ENCODE measurements at regions of chr7 and their contacts with region 1.

Region 1: GRCh38 chr7:151782598-151783448 is 94.1 kb downstream of the PRKAG2 start:
- DNase-seq: peak; percentile 77
- H3K4me3 ChIP-seq: peak overlapping the region in 1 of 2 donors; percentile 32
- H3K27ac ChIP-seq: no peak overlapping the region
- H3K4me1 ChIP-seq: peaks cover 6% of the 10 kb centered on the region
- H3K27me3 ChIP-seq: no peaks in the 10 kb centered on the region
- CTCF ChIP-seq: peak; percentile 67 to 85 (median 71)
- POLR2A ChIP-seq: no peak

Region 2: DNA sequence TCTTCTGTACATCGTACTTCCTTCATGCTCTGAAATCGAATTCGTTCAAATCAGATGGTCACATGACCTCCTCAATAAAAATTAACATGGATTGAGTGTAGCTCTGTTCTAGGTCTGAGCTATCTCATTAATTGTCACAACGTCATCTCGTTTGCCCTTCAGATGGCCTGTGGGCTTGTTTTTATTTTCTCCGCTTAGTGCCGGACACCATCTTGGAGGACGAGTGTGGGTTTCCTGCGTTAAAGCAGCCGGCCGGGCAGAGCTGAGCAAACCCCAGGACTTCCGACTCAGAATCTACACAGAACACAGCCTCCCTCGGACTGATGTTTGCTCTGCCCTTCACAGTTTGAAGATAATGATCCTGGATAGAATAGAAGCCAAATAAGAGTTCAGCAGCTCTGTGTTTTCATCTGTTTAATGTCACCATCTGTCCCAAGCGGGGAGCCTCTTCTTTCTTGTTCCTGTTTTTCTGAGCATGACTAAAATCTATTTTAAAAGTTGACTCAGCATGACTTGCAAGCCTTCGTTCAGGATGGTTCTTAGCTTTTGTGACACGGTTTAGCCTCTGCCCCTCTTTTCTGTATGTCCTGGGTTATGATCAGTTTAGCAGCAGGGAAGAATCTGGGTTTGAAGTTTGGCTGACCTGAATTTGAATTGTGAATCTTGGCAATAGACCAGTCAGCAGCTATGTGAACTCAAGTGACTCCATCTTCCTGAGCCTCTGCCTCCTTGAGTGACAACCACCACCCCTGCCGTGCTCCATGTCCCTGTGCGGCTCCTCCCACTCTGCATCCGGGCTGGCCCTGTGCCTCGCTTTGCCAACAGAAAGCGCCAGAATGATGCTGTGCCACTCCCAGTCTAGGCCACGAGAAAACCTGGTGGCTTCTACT is 142.9 kb after region 1 on chr7:
- intact Hi-C with region 1: loop called (anchors 10 kb)
- DNase-seq: peak; percentile 27
- H3K4me3 ChIP-seq: no peak overlapping the region
- H3K27ac ChIP-seq: no peak overlapping the region
- H3K4me1 ChIP-seq: no peaks in the 10 kb centered on the region
- H3K27me3 ChIP-seq: no peaks in the 10 kb centered on the region
- CTCF ChIP-seq: no peak
- POLR2A ChIP-seq: no peak

Region 3: DNA sequence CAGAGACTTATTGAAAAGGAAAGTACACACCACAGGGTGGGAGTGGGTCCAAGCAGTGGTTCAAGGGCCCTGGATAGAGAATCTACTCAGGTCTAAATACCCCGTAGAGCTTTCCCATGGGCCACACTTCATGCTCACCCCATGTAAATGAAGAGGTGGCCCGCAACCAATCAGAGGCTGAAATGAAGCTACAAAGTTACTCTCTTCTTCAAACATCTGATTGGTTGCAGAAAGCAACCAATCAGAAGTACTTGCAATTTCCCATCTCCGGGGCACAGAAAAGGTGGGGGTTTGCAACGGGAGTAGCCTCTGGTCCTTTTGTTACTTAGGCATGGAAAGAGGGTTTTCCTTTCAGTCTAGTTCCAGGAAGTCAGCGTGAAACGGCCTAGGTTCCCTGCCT is 158.2 kb after region 1 on chr7:
- intact Hi-C with region 1: no loop called
- DNase-seq: no peak
- H3K4me3 ChIP-seq: no peak overlapping the region
- H3K27ac ChIP-seq: no peak overlapping the region
- H3K4me1 ChIP-seq: no peaks in the 10 kb centered on the region
- H3K27me3 ChIP-seq: no peaks in the 10 kb centered on the region
- CTCF ChIP-seq: no peak
- POLR2A ChIP-seq: no peak

Measured in testis (tissue), 5 donors.